HCT116 (cell line): ENCODE measurements at regions of chr2 and their contacts with region 1.

Region 1: GRCh38 chr2:148509288-148509902 is 135.2 kb upstream of the EPC2 start:
- DNase-seq: peak; percentile 74
- ATAC-seq: peak; percentile 100
- H3K4me3 ChIP-seq: peak overlapping the region; percentile 14 to 27; a peak in 3 of 4 replicates
- H3K27ac ChIP-seq: no peak overlapping the region
- H3K4me1 ChIP-seq: peaks cover 0 to 10% of the 10 kb centered on the region in 2 experiments; a peak in 2 of 4 replicates
- H3K27me3 ChIP-seq: no peaks in the 10 kb centered on the region
- CTCF ChIP-seq: peak; percentile 81 to 94 (median 91)
- POLR2A ChIP-seq: no peak
- RAD21 ChIP-seq: peak; percentile 91

Region 2: GRCh38 chr2:147937744-147938349 is 571.5 kb before region 1 on chr2:
- CTCF ChIA-PET with region 1: interaction called, 10 read pairs
- POLR2A ChIA-PET with region 1: no interaction called
- RAD21 ChIA-PET with region 1: no interaction called
- intact Hi-C with region 1: loop called (anchors 1 kb)
- DNase-seq: peak; percentile 7
- ATAC-seq: peak; percentile 61; the same call in 1 of the 2 replicates
- H3K4me3 ChIP-seq: no peak overlapping the region
- H3K27ac ChIP-seq: no peak overlapping the region
- H3K4me1 ChIP-seq: no peaks in the 10 kb centered on the region
- H3K27me3 ChIP-seq: no peaks in the 10 kb centered on the region
- CTCF ChIP-seq: peak; percentile 49 to 78 (median 76)
- POLR2A ChIP-seq: no peak
- RAD21 ChIP-seq: peak; percentile 78

Region 3: GRCh38 chr2:147989809-147990403 is 519.5 kb before region 1 on chr2:
- CTCF ChIA-PET with region 1: interaction called, 18 read pairs
- POLR2A ChIA-PET with region 1: no interaction called
- RAD21 ChIA-PET with region 1: interaction called in 1 of 2 experiments, 3 read pairs
- intact Hi-C with region 1: loop called (anchors 1 kb)
- DNase-seq: peak; percentile 18
- ATAC-seq: peak; percentile 73
- H3K4me3 ChIP-seq: no peak overlapping the region
- H3K27ac ChIP-seq: no peak overlapping the region
- H3K4me1 ChIP-seq: no peaks in the 10 kb centered on the region
- H3K27me3 ChIP-seq: no peaks in the 10 kb centered on the region
- CTCF ChIP-seq: peak; percentile 44 to 98 (median 79)
- POLR2A ChIP-seq: no peak
- RAD21 ChIP-seq: peak; percentile 86

Region 4: GRCh38 chr2:148201075-148202004 is 308.1 kb before region 1 on chr2:
- CTCF ChIA-PET with region 1: no interaction called
- POLR2A ChIA-PET with region 1: no interaction called
- RAD21 ChIA-PET with region 1: no interaction called
- intact Hi-C with region 1: loop called (anchors 5 kb)
- DNase-seq: peak; percentile 42
- ATAC-seq: peak; percentile 99
- H3K4me3 ChIP-seq: no peak overlapping the region
- H3K27ac ChIP-seq: no peak overlapping the region
- H3K4me1 ChIP-seq: no peaks in the 10 kb centered on the region
- H3K27me3 ChIP-seq: no peaks in the 10 kb centered on the region
- CTCF ChIP-seq: peak; percentile 65 to 73 (median 69)
- POLR2A ChIP-seq: no peak
- RAD21 ChIP-seq: peak; percentile 71

Region 5: DNA sequence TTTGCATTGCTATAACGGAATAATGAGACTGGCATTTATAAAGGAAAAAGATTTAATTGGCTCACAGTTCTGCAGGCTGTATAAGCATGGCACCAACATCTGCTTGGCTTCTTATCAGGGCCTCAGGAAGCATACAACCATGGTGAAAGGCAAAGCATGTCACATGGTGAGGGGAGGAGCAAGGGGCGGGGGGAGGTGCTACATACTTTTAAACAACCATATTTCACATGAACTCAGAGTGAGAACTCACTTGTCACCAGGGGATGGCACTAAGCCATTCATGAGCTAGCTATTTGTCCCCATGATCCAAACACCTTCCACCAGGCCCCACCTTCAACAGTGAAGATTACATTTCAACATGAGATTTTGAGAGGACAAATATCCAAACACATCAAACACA is 299.8 kb before region 1 on chr2:
- CTCF ChIA-PET with region 1: interaction called, 10 read pairs
- POLR2A ChIA-PET with region 1: no interaction called
- RAD21 ChIA-PET with region 1: no interaction called
- intact Hi-C with region 1: loop called (anchors 5 kb)
- DNase-seq: peak; percentile 15
- ATAC-seq: peak; percentile 82
- H3K4me3 ChIP-seq: no peak overlapping the region
- H3K27ac ChIP-seq: no peak overlapping the region
- H3K4me1 ChIP-seq: 0 out of 4 replicates have a peak, but pooled peaks cover 0 to 4% of the 10 kb centered on the region in 2 experiments
- H3K27me3 ChIP-seq: no peaks in the 10 kb centered on the region
- CTCF ChIP-seq: no peak
- POLR2A ChIP-seq: no peak
- RAD21 ChIP-seq: no peak

Region 6: GRCh38 chr2:148402786-148403185 is 106.6 kb before region 1 on chr2:
- CTCF ChIA-PET with region 1: no interaction called
- POLR2A ChIA-PET with region 1: no interaction called
- RAD21 ChIA-PET with region 1: no interaction called
- intact Hi-C with region 1: no loop called
- DNase-seq: no peak
- ATAC-seq: no peak
- H3K4me3 ChIP-seq: no peak overlapping the region
- H3K27ac ChIP-seq: no peak overlapping the region
- H3K4me1 ChIP-seq: no peaks in the 10 kb centered on the region
- H3K27me3 ChIP-seq: no peaks in the 10 kb centered on the region
- CTCF ChIP-seq: no peak
- POLR2A ChIP-seq: no peak
- RAD21 ChIP-seq: no peak

Region 7: DNA sequence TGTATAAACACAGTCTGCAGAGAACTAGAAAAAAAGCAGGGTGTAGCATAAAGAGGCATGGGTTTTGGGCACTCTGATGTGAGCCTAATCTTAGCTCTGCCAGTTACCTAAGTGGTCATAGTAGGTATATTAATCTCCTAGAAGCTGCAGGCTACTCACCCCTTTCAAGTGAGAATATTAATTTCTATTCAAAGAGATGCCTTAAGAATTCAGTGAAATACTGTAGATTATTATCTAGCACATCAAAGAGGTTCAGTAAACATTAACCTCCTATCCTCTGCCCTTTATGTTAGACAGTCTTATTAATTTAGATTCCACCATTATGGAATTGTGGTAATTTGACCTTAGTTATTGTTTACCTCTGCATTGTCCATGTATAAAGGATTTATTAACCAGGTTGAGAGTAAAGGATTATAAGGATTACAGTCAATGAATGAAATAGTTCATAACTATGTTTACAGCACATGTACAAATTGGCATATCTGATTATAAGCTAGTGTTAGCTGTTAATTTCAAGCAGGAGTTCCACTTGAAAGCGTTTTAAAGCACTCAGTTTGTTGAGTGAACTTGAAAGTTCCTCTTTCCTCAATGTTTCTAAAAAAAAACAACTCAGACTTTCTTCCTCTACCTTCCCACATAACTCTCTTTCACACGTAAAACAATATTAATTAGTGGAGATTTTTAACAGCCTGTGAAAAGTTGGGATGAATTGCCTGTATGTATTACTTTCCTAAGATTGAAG is 15.4 kb before region 1 on chr2:
- CTCF ChIA-PET with region 1: interaction called, 13 read pairs
- POLR2A ChIA-PET with region 1: no interaction called
- RAD21 ChIA-PET with region 1: no interaction called
- intact Hi-C with region 1: no loop called
- DNase-seq: no peak
- ATAC-seq: no peak
- H3K4me3 ChIP-seq: no peak overlapping the region
- H3K27ac ChIP-seq: no peak overlapping the region
- H3K4me1 ChIP-seq: no peaks in the 10 kb centered on the region
- H3K27me3 ChIP-seq: no peaks in the 10 kb centered on the region
- CTCF ChIP-seq: no peak
- POLR2A ChIP-seq: no peak
- RAD21 ChIP-seq: no peak

Region 8: GRCh38 chr2:148781544-148781943 is 272.1 kb after region 1 on chr2:
- CTCF ChIA-PET with region 1: no interaction called
- POLR2A ChIA-PET with region 1: no interaction called
- RAD21 ChIA-PET with region 1: no interaction called
- intact Hi-C with region 1: no loop called
- DNase-seq: no peak
- ATAC-seq: no peak
- H3K4me3 ChIP-seq: no peak overlapping the region
- H3K27ac ChIP-seq: no peak overlapping the region
- H3K4me1 ChIP-seq: no peaks in the 10 kb centered on the region
- H3K27me3 ChIP-seq: no peaks in the 10 kb centered on the region
- CTCF ChIP-seq: no peak
- POLR2A ChIP-seq: no peak
- RAD21 ChIP-seq: no peak